ENCODE measurements at regions of chr2 and their contacts with region 1.

Region 1: GRCh38 chr2:190879474-190880377 is 895 bp upstream of the GLS start:
- DNase-seq: no peak
- H3K4me3 ChIP-seq: peak overlapping the region; percentile 82 to 94 (median 86)
- H3K27ac ChIP-seq: peak overlapping the region; percentile 90 to 95
- H3K4me1 ChIP-seq: no peaks in the 10 kb centered on the region
- H3K27me3 ChIP-seq: no peaks in the 10 kb centered on the region
- CTCF ChIP-seq: no peak
- POLR2A ChIP-seq: no peak

Region 2: GRCh38 chr2:191231995-191232394 is 352.3 kb after region 1 on chr2:
- intact Hi-C with region 1: loop called (anchors 10 kb)
- DNase-seq: no peak
- H3K4me3 ChIP-seq: no peak overlapping the region
- H3K27ac ChIP-seq: peak overlapping the region; percentile 35 to 54
- H3K4me1 ChIP-seq: no peaks in the 10 kb centered on the region
- H3K27me3 ChIP-seq: no peaks in the 10 kb centered on the region
- CTCF ChIP-seq: peak; percentile 26 to 31 (median 27)
- POLR2A ChIP-seq: no peak

Measured in breast epithelium (tissue), 4 donors.